ENCODE measurements at regions of chr3 and their contacts with region 1.

Region 1: DNA sequence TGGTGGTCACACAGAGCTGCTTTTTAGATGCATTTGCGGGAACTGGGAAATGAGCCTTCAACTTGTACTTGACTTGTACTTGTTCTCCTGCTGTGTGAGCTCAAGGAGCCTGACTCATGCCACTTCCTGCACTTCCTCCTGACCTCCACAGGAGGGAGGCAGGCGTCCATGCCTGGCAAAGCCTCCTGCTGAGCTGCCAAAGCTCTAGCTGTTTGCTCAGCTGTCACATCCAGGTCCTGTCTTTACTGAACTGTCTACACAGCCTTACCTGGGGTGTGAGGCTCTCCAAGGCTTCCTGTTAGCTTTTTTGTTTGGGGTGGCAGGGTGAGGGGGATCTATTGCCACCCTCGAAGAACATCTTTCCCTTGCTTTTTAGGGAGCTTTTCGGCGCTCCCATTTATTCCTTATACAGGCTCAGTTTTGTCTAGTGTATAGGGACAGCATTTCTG is 6.4 kb downstream of the THPO start:
- DNase-seq: peak; percentile 89
- ATAC-seq: peak; percentile 93
- H3K4me3 ChIP-seq: no peak overlapping the region
- H3K27ac ChIP-seq: no peak overlapping the region
- H3K4me1 ChIP-seq: peaks cover 6% of the 10 kb centered on the region; the same call in 1 of the 2 replicates
- H3K27me3 ChIP-seq: peaks cover 25% of the 10 kb centered on the region
- CTCF ChIP-seq: peak; percentile 99
- POLR2A ChIP-seq: no peak
- RAD21 ChIP-seq: peak; percentile 100

Region 2: DNA sequence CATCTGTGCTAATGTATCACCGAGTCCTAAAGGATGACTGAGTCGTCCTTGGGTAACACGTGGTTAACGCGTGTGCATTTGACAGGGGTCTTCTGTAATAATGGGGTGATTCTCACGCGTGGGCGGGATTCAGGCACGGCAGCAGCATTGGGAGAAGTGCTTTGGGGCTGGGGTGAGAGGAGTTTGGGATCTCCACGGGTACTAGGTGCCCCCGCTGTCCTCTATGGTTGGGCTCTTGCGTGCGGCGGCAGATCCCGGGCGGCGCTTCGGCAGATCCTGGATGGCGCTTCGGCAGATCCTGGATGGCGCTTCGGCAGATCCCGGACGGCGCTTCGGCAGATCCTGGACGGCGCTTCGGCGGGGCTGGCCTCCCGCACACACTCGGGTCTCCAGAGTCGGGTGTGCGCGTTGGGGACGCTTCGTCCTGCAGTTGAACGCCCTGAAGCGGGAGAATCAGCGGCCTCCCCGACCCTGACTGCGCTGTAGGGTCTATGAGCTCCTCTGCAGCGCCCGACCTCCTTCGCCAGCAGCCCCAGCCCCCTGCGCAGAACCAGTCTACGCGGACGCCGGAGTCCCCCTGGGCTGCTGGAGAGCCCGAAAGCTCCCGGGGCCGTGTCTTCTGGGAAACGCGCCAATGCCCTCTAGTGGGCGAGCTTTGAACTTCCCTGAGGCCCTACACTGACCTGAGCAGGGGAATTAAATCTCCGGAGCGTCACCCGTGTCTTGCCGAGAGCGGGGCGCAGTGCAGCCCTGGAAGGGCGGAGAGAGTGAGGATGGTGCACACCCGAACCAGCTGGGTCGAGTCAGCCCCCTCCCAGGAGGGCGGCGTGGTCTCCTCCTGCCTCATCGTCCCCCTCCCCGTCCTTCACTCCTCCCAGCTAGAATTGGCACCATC is 141.9 kb after region 1 on chr3:
- CTCF ChIA-PET with region 1: interaction called, 30 read pairs
- POLR2A ChIA-PET with region 1: no interaction called
- dilution Hi-C with region 1: no loop called
- in situ Hi-C with region 1: no loop called
- intact Hi-C with region 1: loop called (anchors 1 kb)
- DNase-seq: peak; percentile 67
- ATAC-seq: peak; percentile 100
- H3K4me3 ChIP-seq: no peak overlapping the region; the same call in 1 of the 2 replicates
- H3K27ac ChIP-seq: no peak overlapping the region
- H3K4me1 ChIP-seq: no peaks in the 10 kb centered on the region
- H3K27me3 ChIP-seq: peaks cover 60% of the 10 kb centered on the region
- CTCF ChIP-seq: peak; percentile 76
- POLR2A ChIP-seq: no peak
- RAD21 ChIP-seq: peak; percentile 75

Region 3: DNA sequence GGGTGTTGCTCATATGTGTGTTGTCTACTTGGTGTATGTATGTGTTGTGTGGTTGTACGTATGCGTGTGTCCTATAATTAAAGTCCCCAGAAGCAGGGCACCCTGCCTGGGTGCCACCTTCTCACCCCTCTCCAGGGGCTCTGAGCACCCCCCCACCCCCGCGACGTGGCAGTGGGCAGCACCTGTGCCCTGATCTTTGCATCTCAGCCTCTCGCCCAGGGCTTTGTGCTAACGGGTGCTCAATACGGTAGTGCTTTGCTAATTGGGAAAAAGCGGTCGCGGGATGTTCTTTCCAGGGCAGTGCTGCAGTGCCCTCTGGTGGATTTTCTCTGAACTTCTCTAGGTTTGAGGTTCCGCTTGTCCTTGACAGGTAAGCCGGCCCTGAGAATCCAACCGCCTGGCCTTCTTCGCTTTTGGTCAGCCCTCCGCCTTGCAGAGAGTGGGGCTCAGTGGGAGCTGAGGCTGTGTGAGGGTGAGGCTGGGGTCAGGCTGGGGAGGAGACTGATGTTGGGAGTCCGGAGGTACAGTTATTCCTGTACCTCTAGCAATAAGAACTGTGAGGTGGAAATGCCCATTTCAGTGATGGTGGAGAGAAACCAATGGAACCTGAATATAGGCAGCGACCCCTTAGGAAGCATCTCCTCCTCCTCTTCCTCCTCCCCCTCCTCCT is 172.4 kb after region 1 on chr3:
- CTCF ChIA-PET with region 1: interaction called, 12 read pairs
- POLR2A ChIA-PET with region 1: no interaction called
- dilution Hi-C with region 1: loop called (anchors 25 kb)
- in situ Hi-C with region 1: no loop called
- intact Hi-C with region 1: loop called (anchors 1 kb)
- DNase-seq: peak; percentile 69
- ATAC-seq: peak; percentile 96
- H3K4me3 ChIP-seq: no peak overlapping the region
- H3K27ac ChIP-seq: no peak overlapping the region
- H3K4me1 ChIP-seq: no peaks in the 10 kb centered on the region
- H3K27me3 ChIP-seq: peaks cover 52% of the 10 kb centered on the region
- CTCF ChIP-seq: peak; percentile 91
- POLR2A ChIP-seq: no peak
- RAD21 ChIP-seq: peak; percentile 90

Region 4: DNA sequence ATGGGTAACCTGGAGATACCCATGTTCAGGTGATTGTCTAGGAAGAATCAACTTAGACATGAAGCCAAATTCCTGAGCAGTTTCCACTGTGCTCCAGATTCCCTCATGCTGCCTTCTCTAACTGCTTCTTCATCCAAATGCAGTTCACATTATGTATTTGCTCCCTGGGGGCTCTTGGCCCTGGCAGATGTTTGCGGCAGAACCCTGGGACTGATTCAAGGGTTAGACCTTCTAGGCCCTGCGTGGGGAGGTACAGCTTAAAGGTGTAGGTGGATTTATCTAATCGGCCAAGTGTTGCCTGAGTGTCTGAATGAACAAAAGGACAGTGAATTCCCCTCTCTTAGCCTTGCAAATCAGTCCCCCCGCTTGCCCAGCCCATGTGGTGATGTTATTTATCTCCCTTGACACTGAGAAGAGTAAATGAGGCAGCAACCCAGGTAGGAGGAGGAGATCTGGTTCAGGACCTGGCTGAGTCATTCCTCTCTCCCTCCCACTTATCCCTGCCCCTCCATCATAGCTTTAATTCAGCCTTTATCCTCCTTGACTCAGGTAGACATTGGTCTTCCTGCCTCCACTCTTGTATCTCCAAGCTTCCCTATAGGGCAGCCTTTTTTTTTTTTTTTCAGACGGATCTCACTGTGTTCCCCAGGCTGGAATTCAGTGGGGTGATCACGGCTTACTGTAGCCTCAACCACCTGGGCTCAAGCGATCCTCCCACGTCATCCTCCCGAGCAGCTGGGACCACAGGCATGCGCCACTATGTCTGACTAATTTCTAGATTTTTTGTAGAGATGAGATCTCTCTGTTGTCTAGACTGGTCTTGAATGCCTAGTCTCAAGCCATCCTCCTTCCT is 285.5 kb after region 1 on chr3:
- CTCF ChIA-PET with region 1: no interaction called
- POLR2A ChIA-PET with region 1: no interaction called
- dilution Hi-C with region 1: no loop called
- in situ Hi-C with region 1: no loop called
- intact Hi-C with region 1: no loop called
- DNase-seq: peak; percentile 71
- ATAC-seq: peak; percentile 31; the same call in 1 of the 2 replicates
- H3K4me3 ChIP-seq: no peak overlapping the region
- H3K27ac ChIP-seq: no peak overlapping the region
- H3K4me1 ChIP-seq: peaks cover 8% of the 10 kb centered on the region; the same call in 1 of the 2 replicates
- H3K27me3 ChIP-seq: peaks cover 21% of the 10 kb centered on the region
- CTCF ChIP-seq: no peak
- POLR2A ChIP-seq: no peak
- RAD21 ChIP-seq: no peak

Region 5: GRCh38 chr3:184800349-184800930 is 428.8 kb after region 1 on chr3:
- CTCF ChIA-PET with region 1: no interaction called
- POLR2A ChIA-PET with region 1: no interaction called
- dilution Hi-C with region 1: no loop called
- in situ Hi-C with region 1: loop called (anchors 10 kb)
- intact Hi-C with region 1: loop called (anchors 5 kb)
- DNase-seq: no peak
- ATAC-seq: no peak
- H3K4me3 ChIP-seq: no peak overlapping the region
- H3K27ac ChIP-seq: no peak overlapping the region
- H3K4me1 ChIP-seq: 0 out of 2 replicates have a peak, but pooled peaks cover 2% of the 10 kb centered on the region
- H3K27me3 ChIP-seq: peaks cover 2% of the 10 kb centered on the region; the same call in 1 of the 2 replicates
- CTCF ChIP-seq: no peak
- POLR2A ChIP-seq: no peak
- RAD21 ChIP-seq: no peak